ENCODE measurements at regions of chr9 and their contacts with region 1.

Region 1: GRCh38 chr9:127423934-127424675 is at the start of gene ZNF79:
- DNase-seq: peak; percentile 96
- ATAC-seq: peak; percentile 81
- H3K4me3 Mint-ChIP-seq: peak within 1 kb of the TSS; percentile 99
- H3K27ac Mint-ChIP-seq: peak within 1 kb of the TSS; percentile 89
- H3K4me1 Mint-ChIP-seq: peaks cover 49% of the 10 kb centered on the region
- H3K27me3 Mint-ChIP-seq: no peaks in the 10 kb centered on the region
- total RNA-seq, gene ZNF79: 6.9 to 7.6 TPM

Region 2: DNA sequence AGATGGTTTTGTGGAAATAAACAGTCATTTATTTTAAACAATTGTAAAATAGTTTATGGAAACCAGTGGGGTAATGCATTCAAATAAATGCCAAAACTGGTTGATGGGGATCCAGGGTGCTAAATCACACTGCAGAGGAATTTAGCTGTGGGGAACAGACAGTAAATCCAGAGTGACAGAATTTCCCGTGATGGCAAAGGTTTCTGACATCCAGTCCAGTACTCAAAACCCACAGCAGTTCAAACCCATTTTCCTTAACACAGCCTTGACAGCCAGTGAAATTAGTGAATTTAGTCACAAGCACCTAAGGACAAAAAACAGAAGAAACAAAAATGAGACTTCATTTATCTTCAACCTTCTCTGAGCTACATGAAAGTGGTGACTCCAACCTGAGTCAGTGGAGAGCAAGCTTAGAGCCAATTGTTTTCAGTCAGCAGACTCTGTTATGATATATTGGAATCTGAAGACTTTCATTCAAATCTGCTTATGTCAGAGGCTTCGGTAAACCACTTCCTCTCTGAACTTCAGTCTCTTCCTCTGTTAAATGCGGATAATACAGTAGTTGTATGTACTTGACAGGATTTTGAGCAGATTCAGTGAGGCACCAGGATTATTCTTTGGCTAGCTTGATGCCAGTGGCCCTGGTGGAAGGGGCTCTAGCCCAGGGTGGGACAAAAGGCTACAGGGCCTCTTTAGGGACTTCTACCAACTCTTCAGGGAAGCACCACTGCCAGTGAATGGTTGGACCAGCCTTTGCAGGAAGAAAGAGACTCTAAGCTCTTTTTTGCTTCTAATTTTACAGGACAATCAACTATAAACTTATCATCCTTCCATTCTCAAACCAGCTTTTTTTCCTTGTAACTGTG is 1902.4 kb before region 1 on chr9:
- CTCF ChIA-PET with region 1: no interaction called
- POLR2A ChIA-PET with region 1: no interaction called
- intact Hi-C with region 1: loop called in 1 of 2 experiments (anchors 10 kb)
- DNase-seq: peak; percentile 63
- ATAC-seq: peak; percentile 97
- H3K4me3 Mint-ChIP-seq: peak overlapping the region; percentile 27
- H3K27ac Mint-ChIP-seq: peak overlapping the region; percentile 86
- H3K4me1 Mint-ChIP-seq: peaks cover 44% of the 10 kb centered on the region
- H3K27me3 Mint-ChIP-seq: no peaks in the 10 kb centered on the region

Region 3: GRCh38 chr9:126860077-126860756 is 563.9 kb before region 1 on chr9 and contains the start of gene ZBTB34:
- CTCF ChIA-PET with region 1: no interaction called
- POLR2A ChIA-PET with region 1: no interaction called
- intact Hi-C with region 1: loop called in 1 of 2 experiments (anchors 1 kb)
- DNase-seq: peak; percentile 84
- ATAC-seq: peak; percentile 83
- H3K4me3 Mint-ChIP-seq: peak within 1 kb of the TSS; percentile 74
- H3K27ac Mint-ChIP-seq: peak within 1 kb of the TSS; percentile 81
- H3K4me1 Mint-ChIP-seq: peaks cover 19% of the 10 kb centered on the region
- H3K27me3 Mint-ChIP-seq: no peaks in the 10 kb centered on the region
- total RNA-seq, gene ZBTB34: 4.2 to 5.0 TPM

Region 4: GRCh38 chr9:127214421-127215267 is 209.5 kb before region 1 on chr9:
- CTCF ChIA-PET with region 1: no interaction called
- POLR2A ChIA-PET with region 1: interaction called, 3 read pairs
- intact Hi-C with region 1: loop called in 1 of 2 experiments (anchors 2 kb)
- DNase-seq: peak; percentile 80
- ATAC-seq: peak; percentile 83
- H3K4me3 Mint-ChIP-seq: no peak overlapping the region
- H3K27ac Mint-ChIP-seq: no peak overlapping the region
- H3K4me1 Mint-ChIP-seq: peaks cover 4% of the 10 kb centered on the region
- H3K27me3 Mint-ChIP-seq: no peaks in the 10 kb centered on the region

Region 5: GRCh38 chr9:127311239-127311741 is 112.8 kb before region 1 on chr9:
- CTCF ChIA-PET with region 1: no interaction called
- POLR2A ChIA-PET with region 1: no interaction called
- intact Hi-C with region 1: loop called in 1 of 2 experiments (anchors 5 kb)
- DNase-seq: peak; percentile 47
- ATAC-seq: peak; percentile 30
- H3K4me3 Mint-ChIP-seq: no peak overlapping the region
- H3K27ac Mint-ChIP-seq: no peak overlapping the region
- H3K4me1 Mint-ChIP-seq: peaks cover 2% of the 10 kb centered on the region
- H3K27me3 Mint-ChIP-seq: peaks cover 22% of the 10 kb centered on the region

Region 6: GRCh38 chr9:127396808-127397497 is 27.2 kb before region 1 on chr9 and contains the start of gene SLC2A8:
- CTCF ChIA-PET with region 1: interaction called, 5 read pairs
- POLR2A ChIA-PET with region 1: interaction called, 3 read pairs
- intact Hi-C with region 1: loop called in 1 of 2 experiments (anchors 1 kb)
- DNase-seq: peak; percentile 93
- ATAC-seq: peak; percentile 96
- H3K4me3 Mint-ChIP-seq: peak within 1 kb of the TSS; percentile 58
- H3K27ac Mint-ChIP-seq: no peak within 1 kb of the TSS
- H3K4me1 Mint-ChIP-seq: peaks cover 12% of the 10 kb centered on the region
- H3K27me3 Mint-ChIP-seq: peaks cover 62% of the 10 kb centered on the region
- total RNA-seq, gene SLC2A8: 1.3 to 1.7 TPM

Region 7: GRCh38 chr9:127715394-127716337 is 291.6 kb after region 1 on chr9 and contains the starts of genes PTRH1 and TTC16:
- CTCF ChIA-PET with region 1: no interaction called
- POLR2A ChIA-PET with region 1: no interaction called
- intact Hi-C with region 1: loop called in 1 of 2 experiments (anchors 1 kb)
- DNase-seq: peak; percentile 99
- ATAC-seq: peak; percentile 97
- H3K4me3 Mint-ChIP-seq: peak within 1 kb of the TSS; percentile 92
- H3K27ac Mint-ChIP-seq: peak within 1 kb of the TSS; percentile 97
- H3K4me1 Mint-ChIP-seq: peaks cover 25% of the 10 kb centered on the region
- H3K27me3 Mint-ChIP-seq: no peaks in the 10 kb centered on the region
- total RNA-seq, gene PTRH1: 12.9 to 15.1 TPM
- total RNA-seq, gene TTC16: 0.16 to 0.30 TPM